Brain microvascular endothelial cell (primary cell): ENCODE measurements at regions of chr3 and their contacts with region 1.

Region 1: GRCh38 chr3:37221407-37221806 is 47.0 kb upstream of the LRRFIP2 start:
- DNase-seq: peak; percentile 83
- H3K4me3 ChIP-seq: no peak overlapping the region
- H3K27ac ChIP-seq: no peak overlapping the region
- H3K27me3 ChIP-seq: no peaks in the 10 kb centered on the region
- CTCF ChIP-seq: no peak

Region 2: GRCh38 chr3:36937492-36937891 is 283.9 kb before region 1 on chr3:
- in situ Hi-C with region 1: no loop called
- DNase-seq: no peak
- H3K4me3 ChIP-seq: no peak overlapping the region
- H3K27ac ChIP-seq: no peak overlapping the region
- H3K27me3 ChIP-seq: no peaks in the 10 kb centered on the region
- CTCF ChIP-seq: no peak

Region 3: DNA sequence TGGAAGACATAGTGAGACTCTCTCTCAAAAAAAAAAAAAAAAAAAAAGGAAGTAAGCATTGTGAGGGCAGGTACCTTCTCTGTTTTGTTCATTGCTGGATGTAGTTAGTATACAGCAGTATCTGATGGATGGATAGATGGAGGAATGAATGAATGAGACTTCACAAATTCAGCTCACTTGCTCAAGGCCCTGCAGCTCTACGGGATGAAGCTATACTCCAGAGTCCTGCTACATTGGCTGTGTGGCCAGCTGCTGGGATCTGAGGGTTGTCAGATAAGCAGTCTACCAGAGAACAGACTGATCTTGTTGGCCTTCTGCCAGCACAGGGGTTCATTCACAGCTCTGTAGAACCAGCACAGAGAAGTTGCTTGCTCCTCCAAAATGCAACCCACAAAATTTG is 193.1 kb before region 1 on chr3:
- in situ Hi-C with region 1: loop called (anchors 25 kb)
- DNase-seq: no peak
- H3K4me3 ChIP-seq: no peak overlapping the region
- H3K27ac ChIP-seq: no peak overlapping the region
- H3K27me3 ChIP-seq: no peaks in the 10 kb centered on the region
- CTCF ChIP-seq: no peak